Activated CD4-positive, alpha-beta T cell treated with anti-CD3 and anti-CD28 coated beads for 36 hours (primary cell): ENCODE measurements at regions of chr3 and their contacts with region 1.

Region 1: GRCh38 chr3:70358978-70359580 is 46.6 kb upstream of the MDFIC2 start:
- DNase-seq: no peak
- ATAC-seq: no peak
- H3K4me3 Mint-ChIP-seq: no peak overlapping the region
- H3K27ac Mint-ChIP-seq: no peak overlapping the region
- H3K4me1 Mint-ChIP-seq: peaks cover 2% of the 10 kb centered on the region
- H3K27me3 Mint-ChIP-seq: peaks cover 5% of the 10 kb centered on the region

Region 2: DNA sequence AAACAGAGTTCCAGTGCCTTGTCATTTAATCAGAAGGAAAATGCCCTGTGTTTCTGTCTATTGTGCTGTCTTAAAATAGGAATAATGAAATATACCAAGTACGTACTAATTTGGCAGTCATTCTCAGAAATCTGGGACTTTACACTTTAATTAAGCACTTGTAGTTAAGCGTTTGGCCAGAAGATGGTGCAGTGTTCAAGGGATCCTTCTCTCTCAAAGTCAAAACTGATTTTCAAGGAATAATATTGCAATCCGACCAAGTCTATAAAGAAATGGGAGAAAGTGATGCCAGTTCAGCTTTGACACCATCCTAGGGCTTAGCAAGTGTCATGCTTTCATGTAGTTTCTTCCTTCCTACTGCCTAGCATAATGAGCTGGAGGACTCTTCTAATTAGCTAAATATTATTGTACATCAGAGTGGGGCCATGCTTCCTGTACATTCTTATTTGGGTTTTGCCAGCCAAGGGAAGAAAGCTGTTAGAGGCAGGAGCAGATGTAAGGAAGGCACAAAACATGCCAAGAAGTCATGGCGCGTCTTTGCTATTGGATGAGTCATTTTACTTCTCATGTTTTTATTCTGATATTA is 294.8 kb before region 1 on chr3:
- CTCF ChIA-PET with region 1: interaction called, 5 read pairs
- POLR2A ChIA-PET with region 1: no interaction called
- intact Hi-C with region 1: loop called (anchors 1 to 10 kb)
- DNase-seq: peak; percentile 15
- ATAC-seq: peak; percentile 33
- H3K4me3 Mint-ChIP-seq: no peak overlapping the region
- H3K27ac Mint-ChIP-seq: no peak overlapping the region
- H3K4me1 Mint-ChIP-seq: no peaks in the 10 kb centered on the region
- H3K27me3 Mint-ChIP-seq: peaks cover 6% of the 10 kb centered on the region

Region 3: DNA sequence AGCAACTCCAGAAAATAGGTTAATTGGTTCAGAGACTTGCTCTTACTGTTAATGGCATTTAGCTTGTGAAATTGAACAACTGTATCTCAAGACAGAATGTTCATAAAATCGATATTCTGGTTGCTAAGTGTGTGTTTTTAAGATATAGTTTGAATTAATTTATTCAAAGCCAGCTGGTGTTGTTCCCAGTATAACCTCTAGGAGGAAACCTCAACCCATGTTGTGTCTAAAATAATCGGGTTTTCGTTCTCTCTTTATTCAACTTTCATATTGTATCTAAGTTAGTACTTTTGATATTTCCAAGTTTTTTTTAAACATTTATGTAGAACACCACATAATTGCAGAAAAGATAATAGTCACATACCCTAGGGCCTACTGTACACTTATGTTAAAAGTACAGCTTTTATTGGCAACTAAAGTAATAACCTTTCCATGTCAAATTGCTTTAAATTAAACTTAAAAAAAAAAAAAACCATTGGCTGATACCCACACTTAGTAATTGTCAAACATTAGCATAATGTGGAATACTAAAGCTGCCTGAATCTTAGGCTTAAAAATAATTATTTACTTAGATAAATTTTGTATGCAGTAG is 268.7 kb before region 1 on chr3:
- CTCF ChIA-PET with region 1: interaction called, 5 read pairs
- POLR2A ChIA-PET with region 1: no interaction called
- intact Hi-C with region 1: loop called in 1 of 2 experiments (anchors 1 kb)
- DNase-seq: no peak
- ATAC-seq: no peak
- H3K4me3 Mint-ChIP-seq: no peak overlapping the region
- H3K27ac Mint-ChIP-seq: no peak overlapping the region
- H3K4me1 Mint-ChIP-seq: no peaks in the 10 kb centered on the region
- H3K27me3 Mint-ChIP-seq: peaks cover 11% of the 10 kb centered on the region

Region 4: GRCh38 chr3:70120357-70121121 is 238.5 kb before region 1 on chr3:
- CTCF ChIA-PET with region 1: interaction called, 3 read pairs
- POLR2A ChIA-PET with region 1: no interaction called
- intact Hi-C with region 1: loop called (anchors 1 to 2 kb)
- DNase-seq: peak; percentile 84
- ATAC-seq: peak; percentile 58
- H3K4me3 Mint-ChIP-seq: no peak overlapping the region
- H3K27ac Mint-ChIP-seq: no peak overlapping the region
- H3K4me1 Mint-ChIP-seq: no peaks in the 10 kb centered on the region
- H3K27me3 Mint-ChIP-seq: peaks cover 20% of the 10 kb centered on the region

Region 5: DNA sequence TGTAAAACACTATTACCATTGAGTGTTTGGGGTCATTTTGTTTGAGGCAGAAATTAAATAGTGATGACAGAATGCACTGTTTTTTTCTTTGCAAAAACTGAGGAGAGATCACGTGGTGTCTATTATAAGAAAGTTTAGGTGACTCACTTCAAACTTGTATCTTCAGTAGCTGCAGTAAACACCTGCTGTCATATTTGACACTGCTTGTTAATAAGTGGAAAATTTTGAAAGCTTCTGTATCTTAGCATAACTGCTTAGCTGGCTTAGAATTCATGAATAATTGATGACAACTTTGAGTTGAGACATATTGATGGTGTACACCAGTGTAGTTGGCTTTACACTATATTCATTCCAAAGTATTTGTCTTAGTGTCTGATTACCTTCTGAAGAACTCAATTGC is 16.9 kb before region 1 on chr3:
- CTCF ChIA-PET with region 1: no interaction called
- POLR2A ChIA-PET with region 1: no interaction called
- intact Hi-C with region 1: no loop called
- DNase-seq: no peak
- ATAC-seq: no peak
- H3K4me3 Mint-ChIP-seq: no peak overlapping the region
- H3K27ac Mint-ChIP-seq: no peak overlapping the region
- H3K4me1 Mint-ChIP-seq: no peaks in the 10 kb centered on the region
- H3K27me3 Mint-ChIP-seq: peaks cover 9% of the 10 kb centered on the region